CD8-positive, alpha-beta T cell (primary cell): ENCODE measurements at regions of chr6 and their contacts with region 1.

Region 1: GRCh38 chr6:138109042-138109997 is 2.1 kb upstream of the PERP start:
- DNase-seq: peak; percentile 61 to 85 (median 81)
- ATAC-seq: peak; percentile 71
- H3K4me3 ChIP-seq: no peak overlapping the region
- H3K4me3 Mint-ChIP-seq: no peak overlapping the region
- H3K27ac ChIP-seq: no peak overlapping the region
- H3K27ac Mint-ChIP-seq: no peak overlapping the region
- H3K4me1 ChIP-seq: peaks cover 9% of the 10 kb centered on the region
- H3K4me1 Mint-ChIP-seq: peaks cover 18% of the 10 kb centered on the region
- H3K27me3 ChIP-seq: peaks cover 5 to 7% of the 10 kb centered on the region in 2 experiments
- H3K27me3 Mint-ChIP-seq: peaks cover 25% of the 10 kb centered on the region
- CTCF ChIP-seq: peak; percentile 92

Region 2: DNA sequence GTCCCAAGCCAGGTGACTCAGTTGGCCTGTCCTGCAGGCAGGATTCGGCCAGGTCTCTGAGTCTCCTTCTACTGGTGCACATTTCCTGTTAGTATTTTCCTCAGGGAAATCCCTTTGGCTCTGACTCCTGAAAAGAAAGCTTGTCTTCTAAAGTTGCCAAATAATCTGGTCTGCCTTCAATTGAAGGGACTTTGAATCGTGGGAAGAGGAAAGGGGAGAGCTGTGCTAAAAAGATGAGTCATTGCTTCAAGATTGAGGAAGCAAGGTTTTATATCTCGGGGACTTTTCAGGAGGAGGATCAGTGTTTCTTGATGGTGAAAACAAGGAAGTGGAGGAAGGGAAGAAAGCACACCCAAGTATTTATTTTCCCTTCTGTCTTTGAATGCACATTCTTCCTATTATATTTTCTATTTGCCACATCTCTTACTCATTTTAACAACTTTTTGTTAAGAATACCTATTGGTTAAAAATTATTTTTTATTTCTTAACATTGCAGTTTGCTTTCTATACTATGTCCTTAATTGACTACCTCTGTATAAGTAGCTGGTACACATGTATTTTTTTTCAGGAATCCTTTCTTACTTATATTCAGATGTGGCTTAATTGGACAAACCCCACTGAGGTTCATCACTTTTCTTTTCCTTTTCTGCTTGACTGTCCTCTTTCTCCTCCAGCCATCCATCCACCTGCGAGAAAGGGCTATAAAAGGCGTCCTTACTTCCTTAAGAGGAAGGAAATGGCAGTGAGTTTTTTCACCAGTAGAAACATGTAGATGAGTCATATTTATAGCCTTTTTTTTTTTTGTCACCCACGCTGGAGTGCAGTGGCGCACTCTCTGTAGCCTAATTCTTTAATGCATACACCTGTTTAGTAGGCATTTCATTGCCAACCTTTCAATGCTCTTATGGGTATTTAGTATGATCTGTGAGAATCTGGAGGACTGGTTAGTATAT is 875.1 kb before region 1 on chr6:
- CTCF ChIA-PET with region 1: no interaction called
- POLR2A ChIA-PET with region 1: no interaction called
- intact Hi-C with region 1: loop called in 1 of 2 experiments (anchors 10 kb)
- DNase-seq: peak in 3 of 9 experiments; percentile 23 to 80 (median 69)
- ATAC-seq: peak; percentile 80
- H3K4me3 ChIP-seq: no peak overlapping the region
- H3K4me3 Mint-ChIP-seq: peak overlapping the region; percentile 13
- H3K27ac ChIP-seq: peak overlapping the region in 1 of 2 experiments; percentile 46
- H3K27ac Mint-ChIP-seq: peak overlapping the region; percentile 65
- H3K4me1 ChIP-seq: peaks cover 43% of the 10 kb centered on the region
- H3K4me1 Mint-ChIP-seq: peaks cover 61% of the 10 kb centered on the region
- H3K27me3 ChIP-seq: no peaks in the 10 kb centered on the region
- H3K27me3 Mint-ChIP-seq: no peaks in the 10 kb centered on the region
- CTCF ChIP-seq: no peak

Region 3: DNA sequence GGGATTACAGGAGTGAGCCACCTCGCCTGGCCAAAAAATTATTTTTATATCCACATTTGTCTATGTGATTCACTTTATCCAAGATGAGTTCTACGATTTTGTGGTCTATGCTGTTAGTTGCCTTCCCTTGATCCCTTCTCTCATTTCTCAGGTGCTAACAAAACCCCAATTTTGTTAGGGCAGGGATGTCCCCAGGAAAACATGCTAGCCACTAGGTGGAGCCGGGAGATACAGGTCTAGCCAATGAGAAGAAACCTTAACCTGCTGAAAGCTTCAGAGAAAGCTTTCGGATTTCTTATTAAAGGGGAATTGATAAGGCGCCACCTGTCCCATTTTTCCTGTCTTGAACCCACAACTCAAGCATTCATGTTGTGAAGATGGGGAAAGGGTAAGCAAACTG is 447.7 kb before region 1 on chr6:
- CTCF ChIA-PET with region 1: interaction called, 7 read pairs
- POLR2A ChIA-PET with region 1: no interaction called
- intact Hi-C with region 1: loop called (anchors 5 kb)
- DNase-seq: peak in 8 of 9 experiments; percentile 22 to 72 (median 48)
- ATAC-seq: no peak
- H3K4me3 ChIP-seq: no peak overlapping the region
- H3K4me3 Mint-ChIP-seq: no peak overlapping the region
- H3K27ac ChIP-seq: no peak overlapping the region
- H3K27ac Mint-ChIP-seq: no peak overlapping the region
- H3K4me1 ChIP-seq: no peaks in the 10 kb centered on the region
- H3K4me1 Mint-ChIP-seq: no peaks in the 10 kb centered on the region
- H3K27me3 ChIP-seq: no peaks in the 10 kb centered on the region
- H3K27me3 Mint-ChIP-seq: no peaks in the 10 kb centered on the region
- CTCF ChIP-seq: peak; percentile 26

Region 4: GRCh38 chr6:138403801-138404661 is 294.7 kb after region 1 on chr6 and contains the start of gene HEBP2:
- CTCF ChIA-PET with region 1: no interaction called
- POLR2A ChIA-PET with region 1: no interaction called
- intact Hi-C with region 1: loop called in 1 of 2 experiments (anchors 5 kb)
- DNase-seq: peak; percentile 85 to 96 (median 93)
- ATAC-seq: peak; percentile 91
- H3K4me3 ChIP-seq: peak within 1 kb of the TSS; percentile 63 to 85
- H3K4me3 Mint-ChIP-seq: peak within 1 kb of the TSS; percentile 90
- H3K27ac ChIP-seq: peak within 1 kb of the TSS; percentile 63 to 85
- H3K27ac Mint-ChIP-seq: peak within 1 kb of the TSS; percentile 97
- H3K4me1 ChIP-seq: peaks cover 15% of the 10 kb centered on the region
- H3K4me1 Mint-ChIP-seq: peaks cover 23% of the 10 kb centered on the region
- H3K27me3 ChIP-seq: no peaks in the 10 kb centered on the region
- H3K27me3 Mint-ChIP-seq: no peaks in the 10 kb centered on the region
- CTCF ChIP-seq: peak; percentile 23
- total RNA-seq, gene HEBP2: 64.6 to 69.1 TPM